ENCODE measurements at regions of chr1 and their contacts with region 1.

Region 1: DNA sequence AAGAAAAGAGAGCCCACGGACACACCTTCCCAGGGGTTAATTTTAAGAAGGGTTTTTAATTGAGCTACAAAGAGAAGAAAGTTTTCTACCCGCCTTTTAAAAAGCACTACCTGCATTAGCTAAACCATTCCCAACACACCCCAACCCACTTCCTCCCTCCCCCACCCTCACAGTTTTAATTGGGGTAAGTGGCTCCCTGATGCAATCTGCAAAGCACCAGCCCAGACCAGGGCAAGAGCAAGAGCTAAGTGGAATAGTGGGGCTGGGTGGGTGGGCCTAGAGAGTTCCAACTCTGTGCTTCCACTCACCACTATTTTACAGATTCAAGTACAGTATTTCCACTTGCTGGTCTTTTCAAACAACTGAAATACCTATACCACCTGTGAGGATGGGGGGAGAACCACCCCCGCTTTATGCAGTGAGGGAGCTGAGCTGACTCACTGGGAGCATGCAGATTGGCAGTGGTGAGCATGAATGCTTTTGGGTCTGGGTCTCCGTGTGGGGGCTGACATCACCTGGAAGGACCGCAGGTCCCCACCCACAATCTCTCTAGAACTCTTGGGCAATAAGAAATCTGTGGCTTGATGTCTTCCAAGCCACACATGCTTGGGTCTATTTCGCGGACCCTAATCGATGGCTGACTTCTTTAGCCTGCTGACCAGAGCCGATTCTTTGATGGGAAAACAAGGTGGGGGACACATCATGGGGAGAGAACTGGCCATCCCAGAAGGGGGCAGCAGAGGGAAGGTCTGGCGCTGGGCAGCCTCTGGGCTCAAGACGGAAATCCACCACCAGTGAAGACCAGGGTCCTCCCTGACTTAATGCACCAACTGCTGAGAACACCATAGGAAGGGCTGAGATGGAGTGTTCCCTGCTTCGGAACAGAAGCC is 95.5 kb downstream of the SSBP3 start:
- DNase-seq: peak in 1 of 2 experiments; percentile 86
- H3K4me3 ChIP-seq: peak overlapping the region in 3 of 4 experiments; percentile 12 to 47 (median 29); a peak in 5 of 8 replicates
- H3K27ac ChIP-seq: peak overlapping the region; percentile 75; the same call in 1 of the 2 replicates
- H3K4me1 ChIP-seq: peaks cover 34 to 51% (median 37%) of the 10 kb centered on the region in 4 experiments
- H3K27me3 ChIP-seq: no peaks in the 10 kb centered on the region
- CTCF ChIP-seq: peak; percentile 63 to 89 (median 79)
- EP300 ChIP-seq: no peak
- POLR2A ChIP-seq: 0 out of 3 replicates have a peak, but pooled peaks of 1 of the 2 experiments have one; percentile 15
- RAD21 ChIP-seq: peak; percentile 83

Region 2: DNA sequence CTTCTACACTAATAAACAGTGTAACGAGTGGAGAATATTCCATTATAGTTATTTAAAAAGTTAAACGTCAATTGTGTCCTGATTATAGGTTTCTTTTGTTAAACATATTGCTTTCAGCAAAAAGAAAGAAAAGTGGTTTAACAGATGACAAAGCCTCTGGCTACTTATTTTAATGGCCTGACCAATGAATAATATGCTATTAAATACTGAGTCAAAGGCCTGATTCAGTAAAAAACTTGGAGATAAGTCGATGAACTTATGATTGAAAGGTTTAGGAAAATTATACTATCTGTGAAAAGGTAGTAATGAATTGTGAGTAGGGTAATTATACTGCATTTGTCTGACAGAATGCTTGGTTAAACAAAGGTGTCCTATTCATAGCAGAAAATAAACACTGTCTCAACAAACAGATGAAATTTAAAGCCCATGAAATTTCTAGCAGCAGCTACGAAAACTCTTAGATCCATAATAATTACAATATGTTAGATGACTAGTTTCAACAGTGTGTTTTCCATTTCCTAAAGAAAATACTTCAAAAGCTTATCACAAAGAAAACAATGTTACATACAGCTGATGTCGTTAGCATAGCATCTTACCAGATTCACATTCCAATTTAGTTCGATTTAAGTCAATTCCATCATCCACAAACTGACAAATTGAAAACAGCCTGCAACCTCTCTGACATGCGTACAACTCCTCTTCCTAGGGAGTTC is 263.9 kb before region 1 on chr1:
- CTCF ChIA-PET with region 1: no interaction called
- POLR2A ChIA-PET with region 1: no interaction called
- DNase-seq: no peak
- H3K4me3 ChIP-seq: no peak overlapping the region
- H3K27ac ChIP-seq: no peak overlapping the region
- H3K4me1 ChIP-seq: peaks cover 0 to under 1% (median under 1%) of the 10 kb centered on the region in 4 experiments; a peak in 1 of 7 replicates
- H3K27me3 ChIP-seq: no peaks in the 10 kb centered on the region
- CTCF ChIP-seq: no peak
- EP300 ChIP-seq: no peak
- POLR2A ChIP-seq: no peak
- RAD21 ChIP-seq: no peak

Region 3: DNA sequence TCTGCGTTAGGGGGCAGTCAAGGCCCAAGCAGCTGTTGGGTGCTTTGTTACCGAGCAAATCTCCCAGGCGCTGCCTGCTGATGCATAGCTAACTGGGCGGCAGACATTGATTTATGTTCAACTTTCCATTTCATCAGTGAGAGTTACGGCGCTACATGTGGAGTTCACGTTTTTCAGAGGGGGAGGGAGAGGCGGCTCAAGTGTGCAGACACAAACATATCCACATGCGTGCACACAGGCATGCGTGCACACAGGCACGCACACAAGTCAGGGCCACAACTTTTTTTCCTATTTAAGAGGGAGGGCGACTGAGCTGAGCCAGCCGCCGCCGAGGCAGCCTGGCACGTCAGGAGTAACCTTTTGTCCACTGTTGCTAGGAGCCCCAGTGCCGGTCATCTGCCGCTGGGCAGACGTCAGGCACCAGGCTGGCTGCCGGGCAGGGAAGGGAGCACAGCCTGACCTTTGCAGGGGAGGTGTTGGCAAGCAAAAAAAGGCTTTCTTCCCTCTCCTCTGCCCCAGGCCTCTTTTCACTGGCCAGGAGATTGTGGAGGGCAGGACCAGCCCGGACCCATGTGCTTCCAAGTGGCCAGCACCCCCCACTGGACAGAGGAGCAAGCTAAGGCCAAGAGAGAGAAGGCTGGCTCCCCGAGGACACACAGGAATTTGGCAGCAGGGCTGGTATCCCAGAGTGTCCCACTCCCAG is 37.4 kb before region 1 on chr1:
- CTCF ChIA-PET with region 1: interaction called, 31 read pairs
- POLR2A ChIA-PET with region 1: interaction called, 3 read pairs
- DNase-seq: peak in 1 of 2 experiments; percentile 65
- H3K4me3 ChIP-seq: no peak overlapping the region; a peak in 1 of 8 replicates
- H3K27ac ChIP-seq: no peak overlapping the region
- H3K4me1 ChIP-seq: peaks cover 9 to 28% (median 21%) of the 10 kb centered on the region in 4 experiments
- H3K27me3 ChIP-seq: no peaks in the 10 kb centered on the region
- CTCF ChIP-seq: peak; percentile 27 to 60 (median 59)
- EP300 ChIP-seq: no peak
- POLR2A ChIP-seq: no peak
- RAD21 ChIP-seq: peak; percentile 59 to 65

Region 4: GRCh38 chr1:54297596-54298283 is 12.9 kb before region 1 on chr1:
- CTCF ChIA-PET with region 1: interaction called, 63 read pairs
- POLR2A ChIA-PET with region 1: interaction called, 24 read pairs
- DNase-seq: no peak
- H3K4me3 ChIP-seq: no peak overlapping the region
- H3K27ac ChIP-seq: no peak overlapping the region
- H3K4me1 ChIP-seq: peaks cover 6 to 26% (median 19%) of the 10 kb centered on the region in 4 experiments
- H3K27me3 ChIP-seq: no peaks in the 10 kb centered on the region
- CTCF ChIP-seq: no peak
- EP300 ChIP-seq: no peak
- POLR2A ChIP-seq: no peak
- RAD21 ChIP-seq: no peak

Region 5: GRCh38 chr1:54335011-54335754 is 24.5 kb after region 1 on chr1:
- CTCF ChIA-PET with region 1: interaction called, 39 read pairs
- POLR2A ChIA-PET with region 1: interaction called, 11 read pairs
- DNase-seq: no peak
- H3K4me3 ChIP-seq: no peak overlapping the region
- H3K27ac ChIP-seq: no peak overlapping the region
- H3K4me1 ChIP-seq: peaks cover 20 to 40% (median 29%) of the 10 kb centered on the region in 4 experiments
- H3K27me3 ChIP-seq: no peaks in the 10 kb centered on the region
- CTCF ChIP-seq: no peak
- EP300 ChIP-seq: no peak
- POLR2A ChIP-seq: no peak
- RAD21 ChIP-seq: no peak

Region 6: GRCh38 chr1:54361342-54361741 is 50.7 kb after region 1 on chr1:
- CTCF ChIA-PET with region 1: interaction called, 69 read pairs
- POLR2A ChIA-PET with region 1: interaction called, 3 read pairs
- DNase-seq: no peak
- H3K4me3 ChIP-seq: no peak overlapping the region
- H3K27ac ChIP-seq: no peak overlapping the region
- H3K4me1 ChIP-seq: peaks cover 16 to 41% (median 26%) of the 10 kb centered on the region in 4 experiments
- H3K27me3 ChIP-seq: no peaks in the 10 kb centered on the region
- CTCF ChIP-seq: peak in 2 of 3 experiments; percentile 33 to 37; a peak in 3 of 4 replicates
- EP300 ChIP-seq: no peak
- POLR2A ChIP-seq: no peak
- RAD21 ChIP-seq: peak; percentile 45 to 62

Region 7: DNA sequence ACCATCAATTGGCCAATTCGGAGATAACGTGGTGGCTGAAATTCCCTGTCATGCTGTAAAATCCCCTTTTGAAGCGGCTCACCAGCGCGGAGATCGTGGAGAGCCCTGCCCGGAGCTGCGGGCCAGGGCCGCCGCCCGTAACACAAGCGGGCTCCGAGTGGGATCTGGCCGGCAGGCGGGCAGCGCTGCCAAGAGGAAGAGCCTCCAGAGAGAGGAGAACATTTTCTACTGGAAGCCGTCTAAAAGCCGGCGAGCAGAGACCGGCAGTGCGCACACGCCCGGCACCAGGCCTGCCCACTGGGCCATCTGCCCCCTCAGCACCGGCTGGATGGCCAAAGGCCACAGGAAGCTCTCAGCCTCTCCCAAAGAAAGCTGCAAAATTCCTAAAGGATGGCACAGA is 80.0 kb after region 1 on chr1:
- CTCF ChIA-PET with region 1: interaction called, 11 read pairs
- POLR2A ChIA-PET with region 1: interaction called, 4 read pairs
- DNase-seq: no peak
- H3K4me3 ChIP-seq: no peak overlapping the region
- H3K27ac ChIP-seq: no peak overlapping the region
- H3K4me1 ChIP-seq: peaks cover 0 to 4% (median 2%) of the 10 kb centered on the region in 4 experiments; a peak in 3 of 7 replicates
- H3K27me3 ChIP-seq: no peaks in the 10 kb centered on the region
- CTCF ChIP-seq: no peak
- EP300 ChIP-seq: no peak
- POLR2A ChIP-seq: no peak
- RAD21 ChIP-seq: no peak

Region 8: DNA sequence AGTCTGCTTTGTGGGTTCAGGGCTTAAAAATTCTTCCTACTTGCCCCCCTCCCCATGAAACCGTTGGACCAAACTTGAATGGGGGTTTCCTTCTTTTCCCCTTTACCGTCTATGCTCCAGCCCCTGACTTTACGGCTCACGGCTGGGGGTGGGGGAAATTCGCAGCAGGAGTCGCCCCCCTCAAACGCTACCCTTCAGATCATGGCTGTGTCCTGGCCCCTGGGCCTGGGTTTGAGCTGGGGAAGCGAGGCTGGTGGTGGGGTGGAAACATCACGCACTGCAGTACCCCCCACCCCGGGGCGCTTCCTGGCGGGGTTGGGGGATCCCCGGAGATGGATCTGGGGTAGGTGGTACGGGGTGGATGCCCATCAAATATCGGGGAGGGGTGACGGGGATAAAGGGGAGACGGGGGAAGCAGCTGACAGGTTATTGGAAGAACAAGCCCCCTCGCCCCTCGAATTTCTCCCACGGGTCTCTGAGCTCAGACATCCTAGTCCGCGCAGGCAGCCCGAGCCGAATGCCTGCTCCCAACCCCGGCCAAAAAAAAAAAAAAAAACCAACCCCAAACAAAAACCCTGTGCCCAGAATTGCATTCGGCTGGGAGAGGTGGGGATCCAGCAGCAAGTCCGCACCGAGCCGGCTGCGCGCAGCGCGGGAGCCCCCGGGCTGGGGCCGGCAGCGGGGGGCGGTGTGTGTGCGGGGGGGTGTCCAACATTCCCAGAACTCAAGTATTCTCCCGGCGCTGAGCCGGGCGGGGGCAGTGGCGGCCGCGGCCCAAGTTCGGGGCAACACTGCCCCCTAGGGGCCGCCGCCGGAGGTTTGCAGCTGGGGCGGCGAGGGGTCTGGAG is 178.3 kb after region 1 on chr1:
- CTCF ChIA-PET with region 1: interaction called, 20 read pairs
- POLR2A ChIA-PET with region 1: interaction called, 6 read pairs
- DNase-seq: peak; percentile 74 to 96
- H3K4me3 ChIP-seq: peak overlapping the region; percentile 24 to 69 (median 64); a peak in 7 of 8 replicates
- H3K27ac ChIP-seq: peak overlapping the region; percentile 96
- H3K4me1 ChIP-seq: peaks cover 7 to 22% (median 15%) of the 10 kb centered on the region in 4 experiments
- H3K27me3 ChIP-seq: peaks cover 0 to 18% (median 11%) of the 10 kb centered on the region in 4 experiments; a peak in 6 of 7 replicates
- CTCF ChIP-seq: peak; percentile 75 to 96 (median 79)
- EP300 ChIP-seq: peak in 1 of 2 experiments; percentile 84; a peak in 1 of 3 replicates
- POLR2A ChIP-seq: peak in 1 of 2 experiments; percentile 47; a peak in 1 of 3 replicates
- RAD21 ChIP-seq: peak; percentile 88 to 90

Measured in H1 (cell line).